Left ventricle myocardium superior (tissue), 1 donor: ENCODE measurements at regions of chr3 and their contacts with region 1.

Region 1: GRCh38 chr3:41569632-41570305 is 370.5 kb downstream of the CTNNB1 start:
- DNase-seq: no peak
- ATAC-seq: no peak

Region 2: DNA sequence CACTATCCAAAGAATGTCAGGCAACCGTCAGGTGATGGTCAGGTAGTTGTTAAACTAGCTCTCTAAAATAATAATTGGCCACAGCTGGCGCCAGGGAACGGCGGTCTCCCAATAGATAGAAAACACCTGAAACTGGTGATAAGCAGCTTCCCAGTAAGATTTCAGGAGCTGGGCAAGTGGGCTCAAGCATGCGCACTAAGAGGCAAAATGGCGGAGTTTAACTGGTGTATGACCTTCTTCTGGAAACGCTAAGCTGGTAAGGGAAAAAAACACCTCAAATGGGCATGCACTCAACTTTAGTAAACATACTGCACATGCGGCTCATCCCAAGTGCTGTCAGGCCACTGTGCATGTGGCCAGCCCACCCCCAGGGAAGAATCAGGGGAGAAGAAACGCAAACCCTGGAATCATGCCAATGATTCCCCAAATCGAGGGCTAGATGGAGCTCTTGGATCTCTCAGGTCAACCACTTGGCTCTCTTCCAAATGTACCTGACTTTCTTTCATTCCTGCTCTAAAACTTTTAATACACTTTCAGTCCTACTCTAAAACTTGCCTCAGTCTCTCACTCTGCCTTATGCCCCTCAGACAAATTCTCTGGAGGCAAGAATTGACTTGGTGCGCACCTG is 850.0 kb before region 1 on chr3:
- intact Hi-C with region 1: loop called (anchors 10 kb)
- DNase-seq: no peak
- ATAC-seq: no peak

Region 3: GRCh38 chr3:41198950-41199865 is 370.6 kb before region 1 on chr3 and contains the start of gene CTNNB1:
- intact Hi-C with region 1: no loop called
- DNase-seq: peak; percentile 96
- ATAC-seq: peak; percentile 91
- total RNA-seq, gene CTNNB1: 145 TPM

Region 4: DNA sequence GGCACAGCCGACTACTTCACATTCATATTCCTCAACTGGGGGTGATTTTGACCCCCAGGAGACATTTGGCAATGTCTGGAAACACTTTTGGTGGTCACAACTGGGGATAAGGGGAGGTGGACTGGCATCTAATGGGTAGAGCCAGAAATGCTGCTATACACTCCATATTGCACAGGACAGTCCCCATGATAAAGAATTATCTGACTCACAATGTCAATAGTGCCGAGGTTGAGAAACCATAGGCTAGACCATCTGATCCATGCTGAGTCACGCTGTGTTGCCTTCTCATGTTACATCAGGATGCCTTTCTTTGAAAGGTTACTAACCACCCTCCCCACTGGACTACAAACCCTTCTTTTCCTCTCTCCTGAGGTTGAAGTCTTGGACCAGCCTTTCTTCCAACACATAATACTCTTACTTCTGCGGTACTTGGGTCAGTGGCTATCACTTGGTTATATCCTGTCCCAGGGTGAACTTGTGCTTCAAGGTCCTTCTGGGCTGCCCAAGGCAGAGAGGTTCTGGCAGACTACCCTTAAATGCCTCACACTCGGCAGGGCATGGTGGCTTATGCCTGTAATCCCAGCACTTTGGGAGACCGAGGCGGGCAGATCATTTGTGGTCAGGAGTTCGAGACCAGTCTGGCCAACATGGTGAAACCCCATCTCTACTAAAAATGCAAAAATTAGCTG is 301.6 kb before region 1 on chr3:
- intact Hi-C with region 1: no loop called
- DNase-seq: no peak
- ATAC-seq: no peak